ENCODE measurements at regions of chr9 and their contacts with region 1.

Region 1: DNA sequence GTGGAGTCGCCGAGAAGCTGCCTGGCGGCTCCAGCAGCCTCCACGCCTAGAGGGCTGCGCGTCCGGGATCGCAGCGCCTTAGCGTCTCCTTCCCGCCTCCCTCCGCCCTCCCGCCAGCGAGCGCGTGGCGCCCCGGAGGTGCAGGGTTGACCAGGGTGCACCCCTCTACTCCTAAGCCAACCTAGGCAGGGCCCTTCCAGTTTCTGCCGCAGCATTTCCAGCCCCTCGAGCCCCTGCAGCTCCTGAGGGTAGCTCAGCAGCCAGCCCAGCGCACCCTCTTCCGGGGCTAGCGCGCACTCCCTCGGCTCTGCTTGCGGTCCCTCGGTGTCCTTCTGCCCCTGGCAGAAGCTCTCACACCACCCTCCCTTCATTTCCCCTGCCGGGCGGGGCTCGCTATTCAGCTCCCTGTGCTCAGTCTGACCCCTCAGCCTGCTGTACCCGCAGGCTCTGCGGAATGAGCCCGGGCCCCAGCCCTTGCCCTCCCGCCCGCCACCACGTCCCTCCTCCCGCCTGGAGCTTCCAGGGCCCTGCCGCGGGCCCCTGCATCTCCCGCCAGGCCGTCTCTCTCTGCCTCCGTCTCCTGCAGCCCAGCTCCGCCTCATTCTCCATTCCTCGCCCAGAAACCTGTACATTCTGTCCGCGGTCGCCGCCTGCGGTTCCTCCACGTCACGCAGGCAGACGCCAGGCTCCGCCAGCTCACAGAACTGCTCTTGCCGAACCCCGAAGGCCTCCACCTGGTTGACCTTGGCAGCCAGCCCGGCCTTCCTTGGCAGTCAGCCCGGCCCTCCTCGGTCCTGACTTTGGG is 61.8 kb downstream of the SPATA31C2 start:
- DNase-seq: peak; percentile 76 to 92 (median 80)
- H3K4me3 ChIP-seq: peak overlapping the region; percentile 50
- H3K27ac ChIP-seq: peak overlapping the region; percentile 66 to 71
- H3K4me1 ChIP-seq: peaks cover 3% of the 10 kb centered on the region
- H3K27me3 ChIP-seq: no peaks in the 10 kb centered on the region
- CTCF ChIP-seq: peak in 1 of 3 donors; percentile 16
- EP300 ChIP-seq: no peak
- POLR2A ChIP-seq: no peak

Region 2: GRCh38 chr9:88041447-88041846 is 35.0 kb before region 1 on chr9:
- intact Hi-C with region 1: loop called in 1 of 4 experiments (anchors 2 kb)
- DNase-seq: no peak
- H3K4me3 ChIP-seq: no peak overlapping the region
- H3K27ac ChIP-seq: no peak overlapping the region
- H3K4me1 ChIP-seq: no peaks in the 10 kb centered on the region
- H3K27me3 ChIP-seq: no peaks in the 10 kb centered on the region
- CTCF ChIP-seq: no peak
- EP300 ChIP-seq: no peak
- POLR2A ChIP-seq: no peak

Region 3: DNA sequence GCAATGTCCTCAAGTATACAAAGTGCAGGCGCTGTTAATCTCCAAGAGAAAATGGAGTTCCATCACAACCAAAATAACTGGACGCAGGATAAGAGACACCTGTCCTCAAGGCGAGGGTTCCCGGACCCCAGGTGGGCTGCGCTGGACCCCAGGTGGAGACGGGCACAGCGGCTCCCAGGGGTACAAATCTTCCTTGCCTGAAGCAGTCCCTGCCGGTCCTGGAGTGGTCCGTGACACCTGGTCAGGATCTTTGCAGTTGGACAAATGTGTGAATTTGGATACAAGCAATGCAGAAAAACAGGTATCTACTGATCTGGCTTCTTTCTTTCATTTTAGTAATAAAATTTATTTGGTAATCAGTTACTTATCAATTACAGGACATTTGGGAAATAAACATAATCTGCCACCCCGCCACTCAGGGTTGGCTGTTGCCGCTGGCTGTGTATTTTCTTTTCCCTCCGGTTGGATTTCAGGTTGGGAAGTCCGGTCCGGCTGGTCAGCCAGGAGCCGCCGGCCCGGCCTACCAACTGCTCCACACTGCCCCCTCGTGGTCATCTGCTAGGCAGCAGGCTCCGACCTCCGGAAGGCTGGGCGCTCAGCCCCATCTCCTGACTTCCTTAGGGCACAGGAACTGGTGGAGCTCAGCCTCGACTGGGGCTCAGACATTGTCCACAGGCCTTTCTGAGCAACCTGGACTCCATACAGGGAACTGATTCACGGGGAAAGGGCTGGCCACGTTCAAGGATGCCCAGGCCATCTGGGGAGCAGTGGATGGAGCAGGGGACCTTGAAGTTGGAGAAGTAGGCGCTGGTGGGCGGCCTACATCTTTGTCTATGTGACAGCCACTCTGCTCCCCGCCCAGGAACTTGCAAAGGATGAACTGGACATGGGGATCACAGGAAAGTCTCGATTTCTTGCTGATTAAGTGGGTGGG is 501.9 kb after region 1 on chr9:
- intact Hi-C with region 1: loop called in 1 of 4 experiments (anchors 10 kb)
- DNase-seq: peak; percentile 75 to 91 (median 86)
- H3K4me3 ChIP-seq: no peak overlapping the region
- H3K27ac ChIP-seq: no peak overlapping the region
- H3K4me1 ChIP-seq: no peaks in the 10 kb centered on the region
- H3K27me3 ChIP-seq: no peaks in the 10 kb centered on the region
- CTCF ChIP-seq: peak; percentile 81 to 93 (median 88)
- EP300 ChIP-seq: no peak
- POLR2A ChIP-seq: no peak

Region 4: DNA sequence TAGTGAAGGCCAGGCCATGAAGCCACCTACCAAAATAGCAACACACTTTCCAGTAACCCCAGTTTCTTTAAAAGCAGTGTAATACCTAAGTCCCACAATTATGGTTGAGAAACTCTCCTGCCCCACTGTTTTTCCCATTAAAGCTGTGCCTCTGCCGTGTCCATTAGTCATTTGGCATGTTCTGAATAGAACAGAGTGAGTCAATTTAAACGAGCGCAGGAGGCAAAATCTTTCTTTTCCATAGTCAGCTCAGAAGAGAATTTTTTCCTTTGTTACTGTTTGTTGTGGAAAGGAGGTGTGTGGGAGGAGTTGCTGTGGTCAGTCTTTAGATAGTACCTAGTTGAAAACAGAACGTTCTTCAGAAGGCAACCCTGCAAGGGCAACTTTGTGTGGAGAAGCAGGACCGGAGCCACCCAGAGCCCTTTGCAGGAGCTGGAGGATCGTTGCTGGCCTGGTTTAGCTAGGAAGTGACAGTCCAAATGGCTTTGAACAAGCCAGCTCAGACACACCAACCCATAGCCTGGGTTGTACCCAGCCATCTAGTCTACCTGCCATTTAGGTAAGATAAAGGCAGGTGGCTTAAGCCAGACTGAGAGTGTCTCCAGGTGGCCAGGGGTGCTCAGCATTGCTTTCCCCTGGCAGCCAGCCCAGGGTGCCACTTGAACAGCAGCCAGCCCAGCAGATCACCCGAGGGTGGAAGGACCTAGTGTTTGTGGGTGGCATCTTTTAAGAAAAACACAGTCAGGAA is 1558.7 kb after region 1 on chr9:
- intact Hi-C with region 1: no loop called
- DNase-seq: peak in 2 of 5 donors; percentile 40 to 56
- H3K4me3 ChIP-seq: no peak overlapping the region
- H3K27ac ChIP-seq: peak overlapping the region in 1 of 2 donors; percentile 27
- H3K4me1 ChIP-seq: peaks cover 18% of the 10 kb centered on the region
- H3K27me3 ChIP-seq: no peaks in the 10 kb centered on the region
- CTCF ChIP-seq: no peak
- EP300 ChIP-seq: no peak
- POLR2A ChIP-seq: no peak